Naive thymus-derived CD4-positive, alpha-beta T cell (primary cell): ENCODE measurements at regions of chr2 and their contacts with region 1.

Region 1: GRCh38 chr2:23916727-23917405 is 10.1 kb downstream of the ATAD2B start:
- DNase-seq: peak in 6 of 9 donors; percentile 8 to 24 (median 17)
- ATAC-seq: peak; percentile 61
- H3K4me3 ChIP-seq: no peak overlapping the region
- H3K4me3 Mint-ChIP-seq: peak overlapping the region in 9 of 10 donors; percentile 8 to 69 (median 38)
- H3K27ac ChIP-seq: peak overlapping the region; percentile 20
- H3K27ac Mint-ChIP-seq: peak overlapping the region in 7 of 9 donors; percentile 0 to 61 (median 48)
- H3K4me1 ChIP-seq: peaks cover 12 to 16% of the 10 kb centered on the region in 2 donors
- H3K4me1 Mint-ChIP-seq: peaks cover 42 to 84% (median 68%) of the 10 kb centered on the region in 7 donors
- H3K27me3 ChIP-seq: no peaks in the 10 kb centered on the region
- H3K27me3 Mint-ChIP-seq: no peaks in the 10 kb centered on the region

Region 2: GRCh38 chr2:23524261-23524706 is 392.6 kb before region 1 on chr2:
- CTCF ChIA-PET with region 1: no interaction called
- POLR2A ChIA-PET with region 1: no interaction called
- intact Hi-C with region 1: no loop called
- DNase-seq: no peak
- ATAC-seq: no peak
- H3K4me3 ChIP-seq: no peak overlapping the region
- H3K4me3 Mint-ChIP-seq: no peak overlapping the region
- H3K27ac ChIP-seq: no peak overlapping the region
- H3K27ac Mint-ChIP-seq: no peak overlapping the region
- H3K4me1 ChIP-seq: peaks cover 0 to 16% of the 10 kb centered on the region in 2 donors
- H3K4me1 Mint-ChIP-seq: peaks cover 7 to 18% (median 14%) of the 10 kb centered on the region in 7 donors
- H3K27me3 ChIP-seq: no peaks in the 10 kb centered on the region
- H3K27me3 Mint-ChIP-seq: peaks cover 0 to 2% (median 0%) of the 10 kb centered on the region in 5 donors

Region 3: GRCh38 chr2:23636426-23636825 is 280.4 kb before region 1 on chr2:
- CTCF ChIA-PET with region 1: no interaction called
- POLR2A ChIA-PET with region 1: no interaction called
- intact Hi-C with region 1: no loop called
- DNase-seq: no peak
- ATAC-seq: no peak
- H3K4me3 ChIP-seq: no peak overlapping the region
- H3K4me3 Mint-ChIP-seq: no peak overlapping the region
- H3K27ac ChIP-seq: no peak overlapping the region
- H3K27ac Mint-ChIP-seq: no peak overlapping the region
- H3K4me1 ChIP-seq: no peaks in the 10 kb centered on the region
- H3K4me1 Mint-ChIP-seq: peaks cover 0 to 9% (median 0%) of the 10 kb centered on the region in 7 donors
- H3K27me3 ChIP-seq: no peaks in the 10 kb centered on the region
- H3K27me3 Mint-ChIP-seq: no peaks in the 10 kb centered on the region

Region 4: DNA sequence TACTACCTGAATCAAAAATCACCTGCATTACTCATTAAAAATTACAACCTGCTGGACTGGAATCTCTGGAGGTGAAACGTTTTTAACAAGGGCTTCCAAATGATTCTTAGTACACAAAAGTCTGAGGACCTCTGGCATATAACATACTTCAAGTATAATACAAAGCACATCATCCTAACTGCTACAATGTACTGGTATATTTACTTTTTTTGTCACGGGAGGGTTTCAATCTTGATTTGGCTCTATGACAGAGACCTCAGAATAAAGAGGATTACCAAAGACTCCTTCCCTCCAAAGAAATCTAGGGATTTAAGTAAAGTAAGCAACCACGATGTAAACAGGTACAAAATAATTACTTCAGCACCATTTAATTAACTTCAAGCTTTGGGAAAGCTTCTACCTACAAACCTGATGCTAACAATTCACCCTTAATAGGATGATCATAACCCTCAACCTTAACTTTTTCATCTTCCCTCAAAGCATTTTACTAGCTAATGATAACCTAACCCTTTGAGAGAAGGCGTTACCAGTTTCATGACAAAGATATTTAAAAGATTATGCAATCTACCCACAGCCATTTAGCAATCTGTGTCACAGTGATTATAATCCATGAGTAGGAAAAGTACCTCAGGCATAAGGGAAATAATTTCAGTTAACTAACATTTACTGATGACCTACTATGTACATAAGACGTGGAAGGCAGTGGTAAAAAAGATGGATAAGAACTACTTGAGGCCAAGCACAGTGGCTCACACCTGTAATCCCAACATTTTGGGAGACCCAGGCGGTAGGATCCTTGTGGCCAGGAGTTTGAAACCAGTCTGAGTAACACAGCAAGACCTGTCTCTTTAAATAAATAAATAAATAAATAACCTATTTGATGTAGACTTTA is 14.6 kb before region 1 on chr2:
- CTCF ChIA-PET with region 1: no interaction called
- POLR2A ChIA-PET with region 1: interaction called, 5 read pairs
- intact Hi-C with region 1: loop called in 1 of 2 experiments (anchors 2 kb)
- DNase-seq: no peak
- ATAC-seq: peak; percentile 46
- H3K4me3 ChIP-seq: no peak overlapping the region
- H3K4me3 Mint-ChIP-seq: no peak overlapping the region
- H3K27ac ChIP-seq: no peak overlapping the region
- H3K27ac Mint-ChIP-seq: no peak overlapping the region
- H3K4me1 ChIP-seq: peaks cover 0 to 3% of the 10 kb centered on the region in 2 donors
- H3K4me1 Mint-ChIP-seq: peaks cover 3 to 66% (median 54%) of the 10 kb centered on the region in 7 donors
- H3K27me3 ChIP-seq: no peaks in the 10 kb centered on the region
- H3K27me3 Mint-ChIP-seq: no peaks in the 10 kb centered on the region